ENCODE measurements at regions of chr14 and their contacts with region 1.

Region 1: DNA sequence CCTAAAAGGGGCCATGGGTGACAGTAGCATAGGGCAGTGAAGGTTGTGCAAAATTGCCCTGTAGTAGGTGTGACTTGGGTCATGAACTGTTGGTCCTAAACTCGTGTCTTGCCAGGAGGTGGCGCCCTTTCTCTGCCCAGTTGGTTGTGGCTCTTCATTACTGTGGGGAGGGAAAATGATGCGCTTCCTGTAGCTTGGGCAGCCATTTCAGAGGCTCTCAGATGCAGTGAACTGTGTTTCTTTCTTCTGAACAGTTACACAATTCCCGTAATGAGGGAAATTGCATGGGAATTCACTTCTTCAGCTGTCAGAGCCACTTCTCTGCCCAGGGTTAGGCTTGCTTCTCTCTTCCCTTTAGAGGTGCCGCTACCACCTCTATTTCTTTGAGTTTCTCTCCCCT is 148.1 kb upstream of the NRXN3 start:
- H3K4me3 ChIP-seq: no peak overlapping the region
- H3K27ac ChIP-seq: no peak overlapping the region
- H3K4me1 ChIP-seq: no peaks in the 10 kb centered on the region
- CTCF ChIP-seq: no peak

Region 2: GRCh38 chr14:78010688-78011087 is 11.4 kb before region 1 on chr14:
- CTCF ChIA-PET with region 1: interaction called, 10 read pairs
- POLR2A ChIA-PET with region 1: no interaction called
- H3K4me3 ChIP-seq: no peak overlapping the region
- H3K27ac ChIP-seq: no peak overlapping the region
- H3K4me1 ChIP-seq: no peaks in the 10 kb centered on the region
- CTCF ChIP-seq: no peak

Measured in HEK293 (cell line).